Mammary epithelial cell (primary cell): ENCODE measurements at regions of chr15 and their contacts with region 1.

Region 1: GRCh38 chr15:95557226-95558046 is 773.1 kb upstream of the NR2F2 start:
- DNase-seq: peak; percentile 90
- H3K4me3 ChIP-seq: no peak overlapping the region
- H3K27ac ChIP-seq: peak overlapping the region; percentile 81
- H3K4me1 ChIP-seq: peaks cover 30% of the 10 kb centered on the region
- H3K27me3 ChIP-seq: no peaks in the 10 kb centered on the region
- CTCF ChIP-seq: no peak

Region 2: GRCh38 chr15:95580130-95580529 is 22.7 kb after region 1 on chr15:
- CTCF ChIA-PET with region 1: no interaction called
- dilution Hi-C with region 1: no loop called
- in situ Hi-C with region 1: no loop called
- intact Hi-C with region 1: no loop called
- DNase-seq: no peak
- H3K4me3 ChIP-seq: no peak overlapping the region
- H3K27ac ChIP-seq: no peak overlapping the region
- H3K4me1 ChIP-seq: no peaks in the 10 kb centered on the region
- H3K27me3 ChIP-seq: peaks cover 2% of the 10 kb centered on the region
- CTCF ChIP-seq: peak in 1 of 2 donors; percentile 33

Region 3: DNA sequence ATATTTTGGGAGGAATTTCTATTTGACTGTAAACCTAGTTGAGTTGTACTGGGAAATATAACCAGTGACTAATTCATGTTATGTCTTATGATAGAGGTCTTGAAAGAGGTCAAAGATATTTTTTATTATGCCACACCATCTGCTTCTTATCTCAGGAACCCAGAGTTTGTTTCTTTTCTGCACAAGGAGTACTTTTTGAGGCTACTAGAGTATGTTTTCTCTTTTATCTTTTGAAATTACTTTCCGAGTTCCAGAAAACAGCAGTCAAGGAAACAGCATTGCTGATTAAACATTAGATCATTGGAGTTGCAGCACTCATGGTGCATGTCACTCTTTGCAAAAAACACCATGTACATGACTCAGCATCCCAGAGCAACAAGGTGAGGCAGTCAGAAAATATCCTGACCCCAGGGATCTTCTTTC is 127.3 kb after region 1 on chr15:
- CTCF ChIA-PET with region 1: no interaction called
- dilution Hi-C with region 1: no loop called
- in situ Hi-C with region 1: no loop called
- intact Hi-C with region 1: loop called (anchors 10 kb)
- DNase-seq: peak; percentile 87
- H3K4me3 ChIP-seq: no peak overlapping the region
- H3K27ac ChIP-seq: peak overlapping the region; percentile 88
- H3K4me1 ChIP-seq: peaks cover 10% of the 10 kb centered on the region
- H3K27me3 ChIP-seq: no peaks in the 10 kb centered on the region
- CTCF ChIP-seq: no peak